ENCODE measurements at regions of chr5 and their contacts with region 1.

Region 1: GRCh38 chr5:5421961-5422818 is at the start of gene ICE1:
- DNase-seq: peak; percentile 97 to 100
- H3K4me3 ChIP-seq: peak within 1 kb of the TSS; percentile 86
- H3K27ac ChIP-seq: peak within 1 kb of the TSS; percentile 89
- H3K4me1 ChIP-seq: peaks cover 32% of the 10 kb centered on the region
- H3K27me3 ChIP-seq: no peaks in the 10 kb centered on the region
- CTCF ChIP-seq: 0 out of 2 replicates have a peak, but pooled peaks have one; percentile 22
- total RNA-seq, gene ICE1: 59.1 and 68.4 TPM in 2 replicates

Region 2: GRCh38 chr5:4879693-4880303 is 542.4 kb before region 1 on chr5:
- CTCF ChIA-PET with region 1: interaction called, 6 read pairs
- POLR2A ChIA-PET with region 1: no interaction called
- intact Hi-C with region 1: loop called (anchors 1 kb)
- DNase-seq: peak; percentile 62 to 90
- H3K4me3 ChIP-seq: no peak overlapping the region
- H3K27ac ChIP-seq: no peak overlapping the region
- H3K4me1 ChIP-seq: no peaks in the 10 kb centered on the region
- H3K27me3 ChIP-seq: peaks cover 95% of the 10 kb centered on the region
- CTCF ChIP-seq: peak; percentile 98

Region 3: GRCh38 chr5:5025775-5026406 is 396.3 kb before region 1 on chr5:
- CTCF ChIA-PET with region 1: no interaction called
- POLR2A ChIA-PET with region 1: no interaction called
- intact Hi-C with region 1: loop called (anchors 10 kb)
- DNase-seq: peak in 1 of 2 experiments; percentile 32
- H3K4me3 ChIP-seq: peak overlapping the region; percentile 57
- H3K27ac ChIP-seq: no peak overlapping the region
- H3K4me1 ChIP-seq: peaks cover 12% of the 10 kb centered on the region; the same call in 1 of the 2 replicates
- H3K27me3 ChIP-seq: peaks cover 43% of the 10 kb centered on the region
- CTCF ChIP-seq: no peak

Region 4: DNA sequence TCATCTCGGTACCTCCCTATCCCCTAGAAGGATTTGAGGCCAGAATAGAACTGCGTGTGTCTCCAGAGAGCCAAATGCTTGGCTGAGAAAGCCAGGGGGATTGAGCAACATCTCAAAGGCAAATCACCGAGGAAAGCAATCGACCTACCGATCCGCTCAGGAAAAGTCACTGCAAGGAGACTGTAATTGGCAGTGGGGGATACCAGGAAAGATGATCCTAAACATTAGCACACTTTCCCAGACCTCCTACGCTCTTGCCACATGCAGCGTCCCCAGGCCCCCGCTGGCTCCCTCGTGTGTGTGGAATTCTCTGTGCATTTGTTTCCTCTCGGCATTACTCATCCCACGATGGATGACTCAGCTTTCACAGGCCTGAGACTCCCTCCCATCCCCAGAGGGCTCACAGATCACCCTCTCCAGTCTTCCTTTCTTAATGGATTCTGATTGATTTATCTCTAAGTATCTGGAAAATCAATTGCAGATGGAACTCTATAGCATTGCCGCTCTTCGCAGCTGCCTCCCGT is 81.9 kb before region 1 on chr5:
- CTCF ChIA-PET with region 1: interaction called, 8 read pairs
- POLR2A ChIA-PET with region 1: interaction called, 3 read pairs
- intact Hi-C with region 1: loop called (anchors 1 kb)
- DNase-seq: peak; percentile 61 to 95
- H3K4me3 ChIP-seq: no peak overlapping the region
- H3K27ac ChIP-seq: no peak overlapping the region
- H3K4me1 ChIP-seq: peaks cover 25% of the 10 kb centered on the region
- H3K27me3 ChIP-seq: no peaks in the 10 kb centered on the region
- CTCF ChIP-seq: peak; percentile 55; the same call in 1 of the 2 replicates

Region 5: GRCh38 chr5:5454391-5454790 is 32.2 kb after region 1 on chr5:
- CTCF ChIA-PET with region 1: no interaction called
- POLR2A ChIA-PET with region 1: no interaction called
- intact Hi-C with region 1: no loop called
- DNase-seq: no peak
- H3K4me3 ChIP-seq: no peak overlapping the region
- H3K27ac ChIP-seq: no peak overlapping the region
- H3K4me1 ChIP-seq: no peaks in the 10 kb centered on the region
- H3K27me3 ChIP-seq: no peaks in the 10 kb centered on the region
- CTCF ChIP-seq: no peak

Region 6: GRCh38 chr5:5492087-5492933 is 70.1 kb after region 1 on chr5:
- CTCF ChIA-PET with region 1: no interaction called
- POLR2A ChIA-PET with region 1: interaction called, 12 read pairs
- intact Hi-C with region 1: no loop called
- DNase-seq: peak; percentile 53 to 68
- H3K4me3 ChIP-seq: no peak overlapping the region
- H3K27ac ChIP-seq: no peak overlapping the region
- H3K4me1 ChIP-seq: no peaks in the 10 kb centered on the region
- H3K27me3 ChIP-seq: no peaks in the 10 kb centered on the region
- CTCF ChIP-seq: peak; percentile 91

Region 7: DNA sequence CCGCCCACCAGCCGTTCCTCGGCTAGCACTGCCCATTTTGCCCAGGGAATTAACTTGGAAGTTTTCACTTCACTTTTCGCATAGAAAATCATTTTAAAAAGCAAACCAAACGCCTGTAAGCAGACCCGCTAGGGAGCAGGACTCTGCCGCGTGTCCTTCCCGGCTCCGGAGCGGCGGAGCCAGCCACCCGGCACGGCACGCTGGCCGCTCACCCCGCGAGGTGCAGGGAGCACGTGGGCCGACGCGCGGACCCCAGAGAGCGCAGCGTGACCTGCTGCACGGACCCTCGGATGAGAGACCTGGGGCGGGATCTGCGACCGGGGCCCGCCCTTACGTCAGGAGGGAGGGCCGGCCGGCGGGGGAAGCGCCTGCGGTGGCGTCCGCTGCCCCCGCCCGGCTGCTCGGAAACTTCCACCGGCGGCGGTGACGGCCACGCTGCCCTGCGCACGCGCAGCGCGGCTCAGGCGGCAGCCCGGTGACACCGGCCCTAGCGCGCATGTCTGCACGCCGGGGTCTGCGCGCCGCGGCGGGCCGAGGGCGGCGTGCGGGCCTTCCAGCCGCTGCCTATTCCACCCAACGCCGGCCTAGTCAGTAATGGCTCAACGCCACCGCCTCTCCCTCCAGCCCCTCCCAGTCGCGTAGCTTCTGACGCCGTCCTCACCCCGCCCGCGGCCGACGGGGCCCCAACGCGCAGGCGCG is 1290.5 kb after region 1 on chr5:
- CTCF ChIA-PET with region 1: no interaction called
- POLR2A ChIA-PET with region 1: no interaction called
- intact Hi-C with region 1: loop called (anchors 2 kb)
- DNase-seq: peak; percentile 92 to 100
- H3K4me3 ChIP-seq: peak overlapping the region; percentile 72
- H3K27ac ChIP-seq: peak overlapping the region; percentile 88
- H3K4me1 ChIP-seq: peaks cover 32% of the 10 kb centered on the region
- H3K27me3 ChIP-seq: no peaks in the 10 kb centered on the region
- CTCF ChIP-seq: 0 out of 2 replicates have a peak, but pooled peaks have one; percentile 15